Activated T-helper 2 cell treated with anti-CD3 and anti-CD28 coated beads, Interferon-gamma antibody, Interleukin-2, Interleukin-4, amounts not matched to agents 10 μg/mL and 5 μg/mL and 100 μg/mL, durations not matched to agents 14 hours and 24 hours and 36 hours (primary cell): ENCODE measurements at regions of chr2 and their contacts with region 1.

Region 1: GRCh38 chr2:213015387-213016165 is 135.8 kb downstream of the IKZF2 start:
- DNase-seq: peak; percentile 51
- H3K4me3 Mint-ChIP-seq: no peak overlapping the region
- H3K27ac Mint-ChIP-seq: peak overlapping the region; percentile 33
- H3K4me1 Mint-ChIP-seq: peaks cover 44% of the 10 kb centered on the region
- H3K27me3 Mint-ChIP-seq: peaks cover 27% of the 10 kb centered on the region

Region 2: GRCh38 chr2:212863185-212863588 is 152.4 kb before region 1 on chr2:
- intact Hi-C with region 1: loop called (anchors 5 kb)
- DNase-seq: peak; percentile 12
- H3K4me3 Mint-ChIP-seq: no peak overlapping the region
- H3K27ac Mint-ChIP-seq: no peak overlapping the region
- H3K4me1 Mint-ChIP-seq: peaks cover 3% of the 10 kb centered on the region
- H3K27me3 Mint-ChIP-seq: no peaks in the 10 kb centered on the region

Region 3: GRCh38 chr2:212928681-212929080 is 86.9 kb before region 1 on chr2:
- intact Hi-C with region 1: loop called (anchors 1 kb)
- DNase-seq: no peak
- H3K4me3 Mint-ChIP-seq: no peak overlapping the region
- H3K27ac Mint-ChIP-seq: no peak overlapping the region
- H3K4me1 Mint-ChIP-seq: peaks cover 38% of the 10 kb centered on the region
- H3K27me3 Mint-ChIP-seq: no peaks in the 10 kb centered on the region

Region 4: DNA sequence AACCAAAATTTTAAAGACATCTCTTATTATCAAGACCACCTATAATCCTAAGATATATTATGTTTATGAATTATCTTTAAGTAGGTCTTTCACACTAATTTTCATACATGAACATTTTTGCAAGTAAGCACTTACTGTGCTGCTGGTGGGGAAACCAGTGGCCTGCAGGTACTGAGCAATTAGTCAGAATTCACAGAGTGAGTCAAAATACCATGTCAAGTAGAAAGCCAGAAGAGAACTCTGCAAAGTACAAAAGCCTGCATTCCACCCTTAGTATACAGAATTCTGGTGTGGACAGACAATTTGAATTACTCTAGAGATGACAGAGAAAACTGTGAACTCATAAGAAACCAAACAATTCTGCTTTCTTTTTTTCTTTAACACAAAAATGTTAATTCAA is 47.3 kb before region 1 on chr2:
- intact Hi-C with region 1: loop called (anchors 1 kb)
- DNase-seq: no peak
- H3K4me3 Mint-ChIP-seq: no peak overlapping the region
- H3K27ac Mint-ChIP-seq: peak overlapping the region; percentile 78
- H3K4me1 Mint-ChIP-seq: peaks cover 31% of the 10 kb centered on the region
- H3K27me3 Mint-ChIP-seq: peaks cover 2% of the 10 kb centered on the region

Region 5: DNA sequence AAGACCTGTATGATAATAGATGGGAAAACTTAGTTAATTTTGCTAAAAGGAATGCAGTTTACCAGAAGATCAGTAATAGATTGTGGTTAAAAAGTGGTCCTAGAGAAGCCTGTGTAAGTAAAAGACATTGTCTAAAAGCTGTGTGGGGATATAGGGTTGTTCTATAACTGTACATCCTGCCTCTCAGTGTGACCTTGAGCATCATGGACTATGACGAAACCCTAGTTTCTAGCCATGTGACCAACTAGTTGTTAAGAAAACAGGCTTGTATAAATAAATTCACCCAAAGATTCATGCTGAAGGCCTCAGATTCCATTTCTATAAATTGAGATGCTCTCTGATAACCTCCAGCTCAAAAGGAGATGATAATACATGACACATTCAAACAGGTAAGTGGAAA is 24.9 kb before region 1 on chr2:
- intact Hi-C with region 1: no loop called
- DNase-seq: no peak
- H3K4me3 Mint-ChIP-seq: no peak overlapping the region
- H3K27ac Mint-ChIP-seq: no peak overlapping the region
- H3K4me1 Mint-ChIP-seq: no peaks in the 10 kb centered on the region
- H3K27me3 Mint-ChIP-seq: peaks cover 14% of the 10 kb centered on the region

Region 6: DNA sequence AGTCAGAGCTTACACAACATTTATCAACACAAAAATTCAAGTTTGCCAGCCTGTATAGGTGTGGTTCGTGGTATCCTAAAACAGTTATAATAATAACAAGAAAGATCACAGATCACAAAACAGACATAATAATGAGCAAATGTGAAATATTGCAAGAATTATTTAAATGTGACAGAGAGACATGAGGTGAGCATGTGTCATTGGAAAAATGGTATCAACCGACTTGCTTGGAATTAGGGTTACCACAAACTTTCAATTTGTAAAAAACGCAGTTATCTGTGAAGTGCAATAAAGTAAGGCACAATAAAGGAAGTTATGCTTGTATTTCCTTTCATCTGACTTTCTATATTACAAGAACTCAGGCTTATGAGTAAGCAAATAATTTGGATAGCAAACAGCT is 19.0 kb after region 1 on chr2:
- intact Hi-C with region 1: loop called (anchors 2 kb)
- DNase-seq: no peak
- H3K4me3 Mint-ChIP-seq: no peak overlapping the region
- H3K27ac Mint-ChIP-seq: peak overlapping the region; percentile 72
- H3K4me1 Mint-ChIP-seq: peaks cover 25% of the 10 kb centered on the region
- H3K27me3 Mint-ChIP-seq: peaks cover 14% of the 10 kb centered on the region

Region 7: DNA sequence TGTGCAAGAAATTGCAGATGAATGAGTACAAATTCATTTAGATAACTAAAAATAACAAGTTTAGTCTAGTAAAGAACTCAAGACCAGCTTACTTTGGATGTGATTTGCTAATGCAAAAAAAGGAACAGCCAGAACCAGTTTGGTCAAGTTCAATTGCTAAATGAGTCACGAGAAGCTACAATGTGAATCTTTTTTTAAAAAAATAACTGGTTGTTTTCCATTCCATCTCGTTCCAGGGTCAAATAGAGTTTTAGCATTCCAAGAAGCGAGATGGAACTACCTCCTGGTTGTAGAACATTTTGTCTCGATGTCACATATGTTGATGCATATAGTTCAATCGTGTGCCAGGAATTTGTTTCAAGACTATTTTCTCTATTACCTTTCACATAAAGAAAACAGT is 200.9 kb after region 1 on chr2:
- intact Hi-C with region 1: no loop called
- DNase-seq: no peak
- H3K4me3 Mint-ChIP-seq: no peak overlapping the region
- H3K27ac Mint-ChIP-seq: no peak overlapping the region
- H3K4me1 Mint-ChIP-seq: no peaks in the 10 kb centered on the region
- H3K27me3 Mint-ChIP-seq: peaks cover 10% of the 10 kb centered on the region